Mammary epithelial cell (primary cell): ENCODE measurements at regions of chr12 and their contacts with region 1.

Region 1: DNA sequence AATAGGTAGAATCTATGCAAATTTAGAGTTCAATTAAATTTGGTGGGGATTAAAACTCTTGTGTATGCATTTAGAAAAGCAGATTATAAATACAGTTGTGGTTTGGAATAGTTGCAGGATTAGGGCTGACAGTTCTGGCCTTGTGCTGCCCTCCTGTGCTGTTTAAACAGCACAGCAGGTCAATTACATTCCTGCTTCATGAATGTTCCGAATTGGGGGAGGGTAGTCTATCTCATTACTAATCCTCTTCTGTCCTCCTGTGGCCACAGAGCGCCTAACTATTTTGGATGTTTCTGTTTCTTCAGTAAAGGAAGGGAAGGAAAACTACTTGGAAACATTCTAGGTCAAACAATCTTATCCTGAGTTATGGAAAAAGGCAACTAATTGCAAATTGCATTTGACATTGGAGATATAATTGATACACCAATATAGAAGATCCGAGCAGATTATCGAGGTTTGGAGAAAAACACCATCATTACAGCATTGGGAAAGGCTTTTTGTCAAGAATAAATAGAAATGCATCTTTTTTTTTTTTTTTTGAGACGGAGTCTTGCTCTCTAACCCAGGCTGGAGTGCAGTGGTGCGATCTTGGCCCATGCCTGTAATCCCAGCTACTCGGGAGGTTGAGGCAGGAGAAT is 8.7 kb upstream of the GPR19 start:
- DNase-seq: peak; percentile 84
- H3K4me3 ChIP-seq: no peak overlapping the region
- H3K27ac ChIP-seq: no peak overlapping the region
- H3K4me1 ChIP-seq: peaks cover 5% of the 10 kb centered on the region
- H3K27me3 ChIP-seq: no peaks in the 10 kb centered on the region
- CTCF ChIP-seq: peak; percentile 99 to 100

Region 2: GRCh38 chr12:11553871-11554533 is 1150.7 kb before region 1 on chr12:
- CTCF ChIA-PET with region 1: no interaction called
- dilution Hi-C with region 1: no loop called
- in situ Hi-C with region 1: loop called (anchors 25 kb)
- intact Hi-C with region 1: loop called (anchors 5 kb)
- DNase-seq: peak; percentile 49
- H3K4me3 ChIP-seq: no peak overlapping the region
- H3K27ac ChIP-seq: no peak overlapping the region
- H3K4me1 ChIP-seq: no peaks in the 10 kb centered on the region
- H3K27me3 ChIP-seq: no peaks in the 10 kb centered on the region
- CTCF ChIP-seq: peak; percentile 52 to 71

Region 3: GRCh38 chr12:12327802-12328201 is 376.9 kb before region 1 on chr12:
- CTCF ChIA-PET with region 1: interaction called, 10 read pairs
- dilution Hi-C with region 1: no loop called
- in situ Hi-C with region 1: no loop called
- intact Hi-C with region 1: loop called (anchors 2 kb)
- DNase-seq: peak; percentile 29
- H3K4me3 ChIP-seq: no peak overlapping the region
- H3K27ac ChIP-seq: no peak overlapping the region
- H3K4me1 ChIP-seq: no peaks in the 10 kb centered on the region
- H3K27me3 ChIP-seq: no peaks in the 10 kb centered on the region
- CTCF ChIP-seq: peak; percentile 70 to 73

Region 4: GRCh38 chr12:12384571-12385340 is 320.0 kb before region 1 on chr12:
- CTCF ChIA-PET with region 1: no interaction called
- dilution Hi-C with region 1: no loop called
- in situ Hi-C with region 1: loop called (anchors 10 kb)
- intact Hi-C with region 1: no loop called
- DNase-seq: no peak
- H3K4me3 ChIP-seq: no peak overlapping the region
- H3K27ac ChIP-seq: no peak overlapping the region
- H3K4me1 ChIP-seq: peaks cover 9% of the 10 kb centered on the region
- H3K27me3 ChIP-seq: no peaks in the 10 kb centered on the region
- CTCF ChIP-seq: no peak

Region 5: GRCh38 chr12:12611512-12612306 is 93.0 kb before region 1 on chr12 and contains the start of gene CREBL2:
- CTCF ChIA-PET with region 1: no interaction called
- dilution Hi-C with region 1: no loop called
- in situ Hi-C with region 1: no loop called
- intact Hi-C with region 1: loop called (anchors 1 kb)
- DNase-seq: peak; percentile 92
- H3K4me3 ChIP-seq: peak within 1 kb of the TSS; percentile 65 to 75 (median 75)
- H3K27ac ChIP-seq: peak within 1 kb of the TSS; percentile 76
- H3K4me1 ChIP-seq: peaks cover 23% of the 10 kb centered on the region
- H3K27me3 ChIP-seq: no peaks in the 10 kb centered on the region
- CTCF ChIP-seq: no peak
- total RNA-seq, gene CREBL2: 18.1 to 40.2 TPM

Region 6: GRCh38 chr12:12724661-12725545 is 20.2 kb after region 1 on chr12:
- CTCF ChIA-PET with region 1: no interaction called
- dilution Hi-C with region 1: no loop called
- in situ Hi-C with region 1: no loop called
- intact Hi-C with region 1: no loop called
- DNase-seq: peak; percentile 97
- H3K4me3 ChIP-seq: peak overlapping the region; percentile 86 to 95 (median 93)
- H3K27ac ChIP-seq: peak overlapping the region; percentile 94
- H3K4me1 ChIP-seq: peaks cover 34% of the 10 kb centered on the region
- H3K27me3 ChIP-seq: no peaks in the 10 kb centered on the region
- CTCF ChIP-seq: no peak

Region 7: DNA sequence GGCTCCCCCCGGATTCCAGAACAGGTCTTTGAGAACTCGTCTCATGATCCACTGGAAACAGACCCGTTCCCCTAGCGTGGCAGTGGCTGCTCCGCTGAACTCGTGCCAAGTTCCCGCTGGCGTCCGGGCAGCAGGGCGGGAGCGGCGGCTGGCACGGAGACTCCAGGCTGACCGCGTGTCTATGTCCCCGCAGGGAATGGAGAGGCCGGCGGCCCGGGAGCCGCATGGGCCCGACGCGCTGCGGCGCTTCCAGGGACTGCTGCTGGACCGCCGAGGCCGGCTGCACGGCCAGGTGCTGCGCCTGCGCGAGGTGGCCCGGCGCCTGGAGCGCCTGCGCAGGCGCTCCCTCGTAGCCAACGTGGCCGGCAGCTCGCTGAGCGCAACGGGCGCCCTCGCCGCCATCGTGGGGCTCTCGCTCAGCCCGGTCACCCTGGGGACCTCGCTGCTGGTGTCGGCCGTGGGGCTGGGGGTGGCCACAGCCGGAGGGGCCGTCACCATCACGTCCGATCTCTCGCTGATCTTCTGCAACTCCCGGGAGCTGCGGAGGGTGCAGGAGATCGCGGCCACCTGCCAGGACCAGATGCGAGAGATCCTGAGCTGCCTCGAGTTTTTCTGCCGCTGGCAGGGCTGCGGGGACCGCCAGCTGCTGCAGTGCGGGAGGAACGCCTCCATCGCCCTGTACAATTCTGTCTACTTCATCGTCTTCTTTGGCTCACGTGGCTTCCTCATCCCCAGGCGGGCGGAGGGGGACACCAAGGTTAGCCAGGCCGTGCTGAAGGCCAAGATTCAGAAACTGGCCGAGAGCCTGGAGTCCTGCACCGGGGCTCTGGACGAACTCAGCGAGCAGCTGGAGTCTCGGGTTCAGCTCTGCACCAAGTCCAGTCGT is 82.2 kb after region 1 on chr12:
- CTCF ChIA-PET with region 1: no interaction called
- dilution Hi-C with region 1: no loop called
- in situ Hi-C with region 1: no loop called
- intact Hi-C with region 1: no loop called
- DNase-seq: peak; percentile 74
- H3K4me3 ChIP-seq: peak overlapping the region; percentile 51 to 62 (median 58)
- H3K27ac ChIP-seq: peak overlapping the region; percentile 40
- H3K4me1 ChIP-seq: peaks cover 27% of the 10 kb centered on the region
- H3K27me3 ChIP-seq: no peaks in the 10 kb centered on the region
- CTCF ChIP-seq: no peak